ENCODE measurements at regions of chr13 and their contacts with region 1.

Region 1: GRCh38 chr13:99436686-99437416 is 64.4 kb upstream of the TM9SF2 start:
- DNase-seq: peak; percentile 88
- H3K4me3 Mint-ChIP-seq: peak overlapping the region; percentile 40
- H3K27ac Mint-ChIP-seq: peak overlapping the region; percentile 65
- H3K4me1 Mint-ChIP-seq: peaks cover 60% of the 10 kb centered on the region
- H3K27me3 Mint-ChIP-seq: peaks cover 29% of the 10 kb centered on the region

Region 2: DNA sequence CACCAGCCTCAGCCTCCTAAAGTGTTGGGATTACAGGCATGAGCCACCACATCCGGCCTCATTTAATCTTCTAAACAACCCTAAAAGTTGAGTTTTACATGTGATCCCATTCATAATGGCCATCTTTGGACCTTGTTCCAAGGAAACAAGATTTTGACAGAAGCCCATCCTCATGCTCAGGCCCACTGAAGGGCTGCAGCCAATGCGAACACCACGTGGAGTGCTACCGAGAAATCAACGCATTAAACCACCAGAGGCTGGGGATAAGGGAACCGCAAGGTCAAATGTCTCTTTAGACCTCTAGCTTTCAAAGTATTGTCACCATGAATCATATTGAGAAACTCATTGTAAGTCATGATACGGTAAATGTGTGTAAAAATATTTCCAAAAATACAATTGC is 409.6 kb before region 1 on chr13:
- intact Hi-C with region 1: loop called (anchors 2 kb)
- DNase-seq: no peak
- H3K4me3 Mint-ChIP-seq: peak overlapping the region; percentile 61
- H3K27ac Mint-ChIP-seq: peak overlapping the region; percentile 85
- H3K4me1 Mint-ChIP-seq: peaks cover 67% of the 10 kb centered on the region
- H3K27me3 Mint-ChIP-seq: no peaks in the 10 kb centered on the region

Region 3: GRCh38 chr13:99214232-99214631 is 222.6 kb before region 1 on chr13:
- intact Hi-C with region 1: loop called (anchors 2 kb)
- DNase-seq: no peak
- H3K4me3 Mint-ChIP-seq: peak overlapping the region; percentile 72
- H3K27ac Mint-ChIP-seq: peak overlapping the region; percentile 90
- H3K4me1 Mint-ChIP-seq: peaks cover 66% of the 10 kb centered on the region
- H3K27me3 Mint-ChIP-seq: peaks cover 3% of the 10 kb centered on the region

Region 4: DNA sequence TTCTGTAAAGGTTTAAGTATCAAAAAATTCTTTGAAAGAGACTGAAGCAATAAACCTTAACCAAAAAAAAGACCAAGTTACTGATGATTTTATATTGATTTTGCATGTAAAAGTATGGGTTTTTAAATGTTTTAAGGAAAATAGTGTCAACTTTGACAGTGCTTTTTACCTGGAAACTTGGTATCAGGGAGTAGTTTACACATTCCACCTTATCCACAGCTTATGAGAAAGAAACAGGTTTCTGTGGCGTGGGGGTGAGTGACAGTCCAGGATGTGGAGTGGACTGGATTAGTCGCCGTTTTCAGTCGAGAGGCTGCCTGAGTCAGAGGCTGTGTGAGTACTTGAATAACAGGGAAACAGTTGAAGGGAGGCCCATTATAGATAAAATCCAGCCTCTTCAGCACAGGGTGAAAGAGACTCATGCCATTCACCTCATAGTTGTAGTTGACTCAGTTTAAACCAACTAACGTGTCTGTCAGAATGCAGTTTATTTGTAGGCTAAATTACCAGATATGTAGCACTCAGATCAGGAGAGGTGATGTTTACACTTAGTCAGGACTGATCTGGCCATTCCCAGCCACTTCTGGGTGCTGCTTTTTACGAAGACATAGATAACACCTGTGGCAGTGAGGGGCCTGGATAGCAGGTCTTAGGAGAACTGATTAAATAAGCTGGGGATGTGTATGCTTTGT is 129.1 kb before region 1 on chr13:
- intact Hi-C with region 1: loop called (anchors 1 kb)
- DNase-seq: peak; percentile 42
- H3K4me3 Mint-ChIP-seq: peak overlapping the region; percentile 83
- H3K27ac Mint-ChIP-seq: peak overlapping the region; percentile 87
- H3K4me1 Mint-ChIP-seq: peaks cover 88% of the 10 kb centered on the region
- H3K27me3 Mint-ChIP-seq: no peaks in the 10 kb centered on the region

Region 5: DNA sequence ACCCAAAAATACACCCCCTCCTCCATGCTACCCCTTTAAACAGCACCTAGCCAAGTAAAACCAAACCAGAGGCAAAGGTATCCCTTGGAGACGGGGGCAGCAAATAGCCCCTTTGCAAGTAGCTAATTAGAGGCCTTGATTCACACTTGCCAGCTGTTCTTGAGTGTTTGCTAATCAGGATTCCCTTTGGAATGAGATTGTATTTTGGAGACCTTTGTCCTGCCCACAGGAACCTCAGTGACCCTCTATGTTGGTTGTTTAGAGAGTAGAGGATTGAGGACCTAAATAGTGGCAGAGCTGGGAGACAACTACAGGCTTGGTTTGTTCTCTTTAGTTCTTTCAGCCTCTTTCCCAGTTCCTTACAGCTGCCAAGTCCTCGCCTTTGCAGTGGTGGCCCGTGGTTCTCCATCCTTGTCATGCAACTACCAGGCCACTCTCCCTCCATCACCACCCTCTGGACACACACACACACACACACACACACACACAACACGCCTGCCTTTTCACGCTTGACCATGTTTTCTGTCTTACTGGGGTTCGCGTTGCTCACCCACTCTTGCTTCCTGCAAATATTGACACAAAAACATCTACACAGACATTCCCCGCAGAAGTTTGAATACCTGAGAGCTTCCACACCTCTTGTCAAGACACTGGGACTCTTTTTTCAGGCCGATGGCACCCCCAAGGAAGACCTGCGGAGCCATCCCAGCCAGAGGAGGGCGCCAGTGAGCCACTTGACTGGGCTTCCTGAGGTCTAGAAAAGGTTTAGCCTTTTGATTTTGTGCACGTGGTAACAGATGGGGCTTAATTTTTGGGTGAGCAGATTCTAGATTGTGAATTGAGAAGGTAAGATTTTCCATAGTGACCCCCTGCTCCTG is 49.7 kb before region 1 on chr13:
- intact Hi-C with region 1: loop called (anchors 1 kb)
- DNase-seq: peak; percentile 62
- H3K4me3 Mint-ChIP-seq: no peak overlapping the region
- H3K27ac Mint-ChIP-seq: peak overlapping the region; percentile 64
- H3K4me1 Mint-ChIP-seq: peaks cover 39% of the 10 kb centered on the region
- H3K27me3 Mint-ChIP-seq: no peaks in the 10 kb centered on the region

Region 6: DNA sequence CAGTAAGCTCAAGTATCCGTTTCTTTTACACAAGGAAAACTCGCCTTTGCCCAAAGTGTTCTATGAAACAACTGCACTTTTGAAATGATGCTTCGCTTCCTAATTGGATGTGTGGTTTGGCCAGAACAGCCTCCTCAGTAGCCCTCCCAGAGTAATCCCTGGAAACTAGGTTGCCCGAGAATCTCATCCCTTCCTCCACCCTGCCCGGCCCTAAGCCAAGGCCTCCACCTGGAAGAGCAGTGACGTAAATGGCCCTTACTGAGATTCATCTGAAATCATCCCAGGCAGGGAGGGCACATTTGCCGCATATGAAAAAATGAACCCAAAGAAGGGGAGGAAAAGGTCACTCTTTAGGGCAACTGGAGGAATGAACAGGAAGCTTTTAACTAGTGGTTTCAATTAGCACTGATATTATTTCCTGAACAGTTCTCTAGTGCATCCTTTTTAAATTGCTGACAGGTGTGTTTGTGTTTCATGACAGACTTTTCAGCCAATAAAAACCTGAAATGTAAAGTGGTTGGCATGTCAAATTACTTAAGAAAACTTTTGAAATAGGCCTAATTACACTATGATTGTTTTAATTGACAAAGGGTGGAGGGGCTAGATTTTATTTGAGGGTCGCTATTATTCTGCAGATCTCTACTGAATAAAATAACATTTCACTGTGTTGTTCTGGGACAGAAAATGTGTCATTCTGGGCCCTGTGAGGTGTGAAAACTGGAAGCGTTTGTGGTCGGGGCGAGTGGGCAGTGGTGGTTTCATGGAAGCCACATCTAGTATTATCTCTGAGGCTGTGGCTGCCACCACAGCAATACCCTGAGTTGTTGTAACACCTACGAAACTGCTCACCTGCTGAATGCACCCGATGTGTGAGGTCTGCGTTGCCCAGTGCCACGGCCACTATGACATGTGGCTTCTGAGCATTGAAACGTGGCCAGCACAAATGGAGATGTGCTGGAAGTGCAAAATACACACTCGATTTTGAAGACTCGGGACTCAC is 422.6 kb after region 1 on chr13:
- intact Hi-C with region 1: loop called (anchors 5 kb)
- DNase-seq: peak; percentile 12
- H3K4me3 Mint-ChIP-seq: no peak overlapping the region
- H3K27ac Mint-ChIP-seq: peak overlapping the region; percentile 76
- H3K4me1 Mint-ChIP-seq: peaks cover 13% of the 10 kb centered on the region
- H3K27me3 Mint-ChIP-seq: peaks cover 64% of the 10 kb centered on the region